CD4-positive, alpha-beta T cell (primary cell): ENCODE measurements at regions of chr13 and their contacts with region 1.

Region 1: DNA sequence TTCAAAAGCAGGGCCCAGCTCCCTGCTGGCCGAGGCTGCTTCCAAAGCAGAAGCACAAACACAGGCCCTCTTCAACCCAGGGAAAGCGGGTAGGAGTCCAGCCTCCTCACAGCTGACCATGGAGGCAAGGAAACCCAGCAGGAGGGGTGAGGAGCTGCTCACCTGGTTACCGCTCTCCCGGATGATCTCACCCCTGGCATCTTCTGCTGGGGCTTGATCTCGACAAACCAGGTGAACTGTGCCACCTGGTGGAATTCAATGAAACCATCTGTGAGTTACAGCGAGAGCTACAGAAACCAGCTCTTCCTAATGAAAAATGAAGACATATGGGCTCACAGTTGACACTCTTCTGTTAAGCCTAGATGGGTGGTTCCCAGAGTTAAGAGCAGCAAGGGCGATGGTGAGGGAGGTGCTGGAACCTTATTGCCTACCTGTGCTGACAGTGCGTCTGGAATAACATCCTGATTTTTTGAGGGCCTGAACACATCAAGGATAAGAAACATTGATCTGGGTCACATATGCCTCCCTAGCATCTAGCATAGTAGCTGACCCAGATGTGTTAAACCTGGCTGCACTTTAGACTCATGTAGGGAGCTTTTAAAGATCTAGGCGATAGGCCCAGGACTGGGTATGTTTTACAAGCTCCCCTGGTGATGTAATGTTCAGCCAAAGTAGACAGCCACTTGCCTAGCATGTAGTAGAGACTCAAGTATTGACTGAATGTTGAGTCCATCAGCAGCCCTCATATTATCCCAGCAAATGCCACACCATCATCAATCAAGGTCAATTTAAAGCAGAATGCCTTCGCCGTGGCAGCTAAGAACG is 6.1 kb downstream of the DHRS12 start:
- DNase-seq: peak; percentile 36 to 87 (median 58)
- ATAC-seq: peak; percentile 63
- H3K4me3 ChIP-seq: no peak overlapping the region
- H3K4me3 Mint-ChIP-seq: no peak overlapping the region
- H3K27ac ChIP-seq: no peak overlapping the region
- H3K27ac Mint-ChIP-seq: peak overlapping the region; percentile 99
- H3K4me1 ChIP-seq: peaks cover 34% of the 10 kb centered on the region
- H3K4me1 Mint-ChIP-seq: peaks cover 27% of the 10 kb centered on the region
- H3K27me3 ChIP-seq: no peaks in the 10 kb centered on the region
- H3K27me3 Mint-ChIP-seq: no peaks in the 10 kb centered on the region
- CTCF ChIP-seq: peak; percentile 71

Region 2: DNA sequence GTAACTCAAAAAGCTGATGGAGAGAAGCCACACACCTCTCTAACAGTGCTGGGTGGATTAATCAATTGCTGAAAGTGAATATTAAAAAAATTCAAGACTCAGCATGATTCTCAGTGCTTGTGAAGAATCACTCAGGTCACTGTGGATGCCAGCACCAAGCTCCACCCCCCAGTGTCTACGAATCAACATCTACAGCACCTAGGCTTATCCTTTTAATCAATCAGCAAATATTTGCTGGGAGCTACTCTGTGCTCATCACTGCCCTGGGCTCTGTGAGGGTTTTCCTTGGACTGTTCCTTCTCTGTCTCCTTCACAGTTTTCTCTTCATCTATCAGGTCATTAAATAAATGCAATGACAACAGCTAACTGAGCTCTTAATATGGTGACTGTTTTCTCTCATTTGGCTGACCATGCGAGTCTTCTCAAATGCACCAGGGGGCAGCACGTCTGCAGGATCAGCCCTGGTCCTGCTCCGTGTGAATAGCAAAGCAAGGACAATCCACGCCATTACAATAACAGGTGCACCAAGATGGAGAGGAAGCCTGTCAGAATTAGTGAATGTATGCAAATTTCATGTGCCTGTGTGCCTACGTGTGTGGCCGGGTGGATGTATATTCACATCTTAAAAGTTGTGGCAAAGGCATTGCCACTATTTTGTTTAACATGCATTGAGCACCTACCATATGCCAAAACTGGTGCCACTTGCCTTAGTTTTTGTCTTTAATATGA is 672.2 kb before region 1 on chr13:
- CTCF ChIA-PET with region 1: interaction called, 7 read pairs
- POLR2A ChIA-PET with region 1: interaction called, 3 read pairs
- intact Hi-C with region 1: loop called in 1 of 2 experiments (anchors 5 kb)
- DNase-seq: peak in 10 of 14 experiments; percentile 4 to 69 (median 20)
- ATAC-seq: peak; percentile 46
- H3K4me3 ChIP-seq: no peak overlapping the region
- H3K4me3 Mint-ChIP-seq: no peak overlapping the region
- H3K27ac ChIP-seq: no peak overlapping the region
- H3K27ac Mint-ChIP-seq: no peak overlapping the region
- H3K4me1 ChIP-seq: no peaks in the 10 kb centered on the region
- H3K4me1 Mint-ChIP-seq: peaks cover 4% of the 10 kb centered on the region
- H3K27me3 ChIP-seq: no peaks in the 10 kb centered on the region
- H3K27me3 Mint-ChIP-seq: peaks cover 15% of the 10 kb centered on the region
- CTCF ChIP-seq: peak; percentile 46

Region 3: DNA sequence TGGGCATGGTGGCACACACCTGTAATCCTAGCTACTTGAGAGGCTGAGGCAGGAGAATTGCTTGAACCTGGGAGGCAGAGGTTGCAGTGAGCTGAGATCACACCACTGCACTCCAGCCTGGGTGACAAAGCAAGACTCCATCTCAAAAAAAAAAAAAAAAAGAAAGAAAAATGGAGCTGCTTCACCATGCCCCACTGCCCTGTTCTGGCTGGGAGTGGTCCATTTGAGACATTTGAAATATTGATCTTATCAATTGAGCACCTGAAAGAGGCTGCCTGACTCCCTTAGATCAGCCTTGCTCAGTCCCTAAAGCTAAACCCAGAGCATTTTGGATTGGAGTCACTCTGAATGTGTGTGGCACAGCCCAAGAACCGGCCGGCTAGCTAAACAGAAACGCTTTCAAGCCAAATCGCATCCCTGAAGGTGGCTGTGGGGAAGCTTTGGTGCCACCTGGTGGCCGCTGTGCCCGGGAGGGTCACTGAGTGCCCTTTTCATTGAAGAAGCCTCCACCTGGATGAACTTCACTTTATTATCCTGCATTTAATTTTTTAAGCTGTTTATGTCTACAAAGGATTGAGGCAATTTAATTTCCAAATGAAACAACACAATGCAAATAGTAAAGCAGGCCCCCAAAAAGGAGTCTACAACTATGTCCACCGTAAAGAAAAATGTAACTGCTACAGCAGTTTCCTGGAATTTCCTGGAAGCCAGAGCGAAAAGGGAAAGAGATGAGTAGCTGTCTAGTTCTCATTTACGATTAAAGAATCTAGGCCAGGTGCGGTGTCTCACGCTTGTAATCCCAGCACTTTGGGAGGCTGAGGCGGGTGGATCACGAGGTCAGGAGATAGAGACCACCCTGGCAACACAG is 511.5 kb before region 1 on chr13:
- CTCF ChIA-PET with region 1: interaction called, 3 read pairs
- POLR2A ChIA-PET with region 1: interaction called, 4 read pairs
- intact Hi-C with region 1: loop called in 1 of 2 experiments (anchors 10 kb)
- DNase-seq: peak; percentile 33 to 73 (median 56)
- ATAC-seq: peak; percentile 52
- H3K4me3 ChIP-seq: no peak overlapping the region
- H3K4me3 Mint-ChIP-seq: no peak overlapping the region
- H3K27ac ChIP-seq: no peak overlapping the region
- H3K27ac Mint-ChIP-seq: no peak overlapping the region
- H3K4me1 ChIP-seq: peaks cover 3% of the 10 kb centered on the region
- H3K4me1 Mint-ChIP-seq: no peaks in the 10 kb centered on the region
- H3K27me3 ChIP-seq: no peaks in the 10 kb centered on the region
- H3K27me3 Mint-ChIP-seq: peaks cover 8% of the 10 kb centered on the region
- CTCF ChIP-seq: peak; percentile 87

Region 4: GRCh38 chr13:51435002-51435578 is 362.8 kb before region 1 on chr13:
- CTCF ChIA-PET with region 1: interaction called, 14 read pairs
- POLR2A ChIA-PET with region 1: interaction called, 7 read pairs
- intact Hi-C with region 1: loop called (anchors 1 to 2 kb)
- DNase-seq: peak in 3 of 14 experiments; percentile 47 to 58 (median 54)
- ATAC-seq: peak; percentile 56
- H3K4me3 ChIP-seq: no peak overlapping the region
- H3K4me3 Mint-ChIP-seq: no peak overlapping the region
- H3K27ac ChIP-seq: no peak overlapping the region
- H3K27ac Mint-ChIP-seq: no peak overlapping the region
- H3K4me1 ChIP-seq: no peaks in the 10 kb centered on the region
- H3K4me1 Mint-ChIP-seq: peaks cover 45% of the 10 kb centered on the region
- H3K27me3 ChIP-seq: no peaks in the 10 kb centered on the region
- H3K27me3 Mint-ChIP-seq: no peaks in the 10 kb centered on the region
- CTCF ChIP-seq: peak; percentile 67

Region 5: GRCh38 chr13:51444922-51445321 is 353.0 kb before region 1 on chr13:
- CTCF ChIA-PET with region 1: interaction called, 8 read pairs
- POLR2A ChIA-PET with region 1: interaction called, 135 read pairs
- intact Hi-C with region 1: loop called in 1 of 2 experiments (anchors 2 kb)
- DNase-seq: peak in 3 of 14 experiments; percentile 45 to 58 (median 49)
- ATAC-seq: peak; percentile 59
- H3K4me3 ChIP-seq: no peak overlapping the region
- H3K4me3 Mint-ChIP-seq: no peak overlapping the region
- H3K27ac ChIP-seq: no peak overlapping the region
- H3K27ac Mint-ChIP-seq: no peak overlapping the region
- H3K4me1 ChIP-seq: no peaks in the 10 kb centered on the region
- H3K4me1 Mint-ChIP-seq: peaks cover 39% of the 10 kb centered on the region
- H3K27me3 ChIP-seq: no peaks in the 10 kb centered on the region
- H3K27me3 Mint-ChIP-seq: no peaks in the 10 kb centered on the region
- CTCF ChIP-seq: peak; percentile 60

Region 6: GRCh38 chr13:51825165-51825592 is 27.3 kb after region 1 on chr13:
- CTCF ChIA-PET with region 1: interaction called, 5 read pairs
- POLR2A ChIA-PET with region 1: interaction called, 39 read pairs
- intact Hi-C with region 1: loop called (anchors 1 to 2 kb)
- DNase-seq: peak in 4 of 14 experiments; percentile 39 to 85 (median 76)
- ATAC-seq: peak; percentile 58
- H3K4me3 ChIP-seq: peak overlapping the region; percentile 54
- H3K4me3 Mint-ChIP-seq: peak overlapping the region; percentile 86
- H3K27ac ChIP-seq: peak overlapping the region; percentile 76 to 79
- H3K27ac Mint-ChIP-seq: peak overlapping the region; percentile 89
- H3K4me1 ChIP-seq: peaks cover 78% of the 10 kb centered on the region
- H3K4me1 Mint-ChIP-seq: peaks cover 88% of the 10 kb centered on the region
- H3K27me3 ChIP-seq: no peaks in the 10 kb centered on the region
- H3K27me3 Mint-ChIP-seq: no peaks in the 10 kb centered on the region
- CTCF ChIP-seq: no peak

Region 7: GRCh38 chr13:51935326-51936201 is 137.7 kb after region 1 on chr13:
- CTCF ChIA-PET with region 1: no interaction called
- POLR2A ChIA-PET with region 1: no interaction called
- intact Hi-C with region 1: no loop called
- DNase-seq: peak in 2 of 14 experiments; percentile 7 to 27
- ATAC-seq: no peak
- H3K4me3 ChIP-seq: no peak overlapping the region
- H3K4me3 Mint-ChIP-seq: no peak overlapping the region
- H3K27ac ChIP-seq: no peak overlapping the region
- H3K27ac Mint-ChIP-seq: no peak overlapping the region
- H3K4me1 ChIP-seq: peaks cover 26% of the 10 kb centered on the region
- H3K4me1 Mint-ChIP-seq: peaks cover 28% of the 10 kb centered on the region
- H3K27me3 ChIP-seq: no peaks in the 10 kb centered on the region
- H3K27me3 Mint-ChIP-seq: no peaks in the 10 kb centered on the region
- CTCF ChIP-seq: no peak

Region 8: DNA sequence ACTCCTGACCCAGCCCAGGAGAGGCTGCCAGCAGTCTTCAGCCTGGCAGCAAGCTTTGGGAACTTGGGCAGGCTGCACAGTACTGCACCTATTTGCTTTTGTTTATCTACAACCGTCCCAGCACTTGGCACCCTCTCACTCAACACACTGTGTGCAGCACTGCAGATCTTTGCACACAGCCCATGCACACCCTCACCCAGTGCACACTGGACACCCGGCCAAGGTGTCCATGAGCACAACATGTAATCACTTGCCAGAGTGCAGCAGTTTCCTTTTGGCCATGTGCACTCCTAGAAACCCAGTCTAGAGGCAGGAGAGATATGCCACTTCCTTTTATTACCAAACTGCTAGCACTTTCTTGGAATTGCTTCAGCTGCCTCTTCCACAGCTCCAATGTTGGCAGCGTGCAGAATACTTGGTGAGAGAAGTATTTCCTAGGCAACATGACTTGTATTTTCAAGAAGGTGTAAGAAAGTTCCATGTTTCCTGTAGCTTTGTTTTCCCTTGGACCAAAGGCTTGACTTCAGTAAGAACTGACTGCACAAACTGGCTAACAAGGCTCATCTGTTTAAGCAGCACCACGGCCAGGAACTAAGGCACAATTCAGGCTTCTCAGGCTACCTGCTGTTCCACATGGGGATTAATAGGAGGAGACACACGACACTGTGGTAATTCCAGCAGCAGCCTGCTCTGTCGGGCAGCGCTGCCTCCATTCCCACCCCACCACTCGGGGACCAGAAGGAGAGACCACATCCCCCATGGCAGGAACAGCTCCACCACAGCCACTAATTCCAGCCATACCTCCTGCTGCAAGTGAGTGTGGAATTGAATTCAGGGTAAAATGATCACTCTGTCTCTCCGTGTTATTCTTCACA is 198.0 kb after region 1 on chr13:
- CTCF ChIA-PET with region 1: no interaction called
- POLR2A ChIA-PET with region 1: no interaction called
- intact Hi-C with region 1: no loop called
- DNase-seq: no peak
- ATAC-seq: no peak
- H3K4me3 ChIP-seq: no peak overlapping the region
- H3K4me3 Mint-ChIP-seq: no peak overlapping the region
- H3K27ac ChIP-seq: no peak overlapping the region
- H3K27ac Mint-ChIP-seq: no peak overlapping the region
- H3K4me1 ChIP-seq: no peaks in the 10 kb centered on the region
- H3K4me1 Mint-ChIP-seq: no peaks in the 10 kb centered on the region
- H3K27me3 ChIP-seq: peaks cover 0 to 4% of the 10 kb centered on the region in 2 experiments
- H3K27me3 Mint-ChIP-seq: peaks cover 4% of the 10 kb centered on the region
- CTCF ChIP-seq: no peak